ENCODE measurements at regions of chr22 and their contacts with region 1.

Region 1: GRCh38 chr22:38051900-38052862 is 5.0 kb upstream of the PICK1 start:
- DNase-seq: peak; percentile 90
- ATAC-seq: peak; percentile 87
- H3K4me3 ChIP-seq: no peak overlapping the region
- H3K4me3 Mint-ChIP-seq: peak overlapping the region; percentile 26
- H3K27ac ChIP-seq: no peak overlapping the region
- H3K27ac Mint-ChIP-seq: no peak overlapping the region
- H3K4me1 ChIP-seq: peaks cover 6 to 20% of the 10 kb centered on the region in 2 donors
- H3K4me1 Mint-ChIP-seq: peaks cover 13% of the 10 kb centered on the region
- H3K27me3 ChIP-seq: peaks cover 0 to 14% (median 2%) of the 10 kb centered on the region in 4 experiments
- H3K27me3 Mint-ChIP-seq: peaks cover 4% of the 10 kb centered on the region
- CTCF ChIP-seq: peak; percentile 88

Region 2: DNA sequence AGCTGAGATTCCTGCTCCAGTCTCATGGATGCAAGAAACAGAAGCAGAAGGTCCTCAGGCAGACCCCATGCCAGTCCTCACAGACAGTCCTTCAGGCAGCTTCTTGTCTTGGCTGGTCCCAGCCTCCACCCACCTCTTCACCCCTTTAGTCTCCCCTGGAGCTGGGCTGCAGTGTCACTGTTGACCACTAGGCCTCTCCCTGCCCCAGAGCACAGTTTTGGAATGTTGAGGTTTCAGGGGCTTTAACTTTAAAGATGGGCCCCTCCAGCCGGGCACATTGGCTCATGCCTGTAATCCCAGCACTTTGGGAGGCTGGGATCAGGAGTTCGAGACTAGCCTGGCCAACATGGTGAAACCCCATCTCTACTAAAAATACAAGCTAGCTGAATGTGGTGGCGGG is 283.9 kb before region 1 on chr22:
- CTCF ChIA-PET with region 1: no interaction called
- POLR2A ChIA-PET with region 1: no interaction called
- intact Hi-C with region 1: no loop called
- DNase-seq: no peak
- ATAC-seq: no peak
- H3K4me3 ChIP-seq: no peak overlapping the region
- H3K4me3 Mint-ChIP-seq: no peak overlapping the region
- H3K27ac ChIP-seq: no peak overlapping the region
- H3K27ac Mint-ChIP-seq: no peak overlapping the region
- H3K4me1 ChIP-seq: no peaks in the 10 kb centered on the region
- H3K4me1 Mint-ChIP-seq: no peaks in the 10 kb centered on the region
- H3K27me3 ChIP-seq: no peaks in the 10 kb centered on the region
- H3K27me3 Mint-ChIP-seq: no peaks in the 10 kb centered on the region
- CTCF ChIP-seq: no peak

Region 3: GRCh38 chr22:37862570-37863325 is 189.4 kb before region 1 on chr22:
- CTCF ChIA-PET with region 1: no interaction called
- POLR2A ChIA-PET with region 1: no interaction called
- intact Hi-C with region 1: no loop called
- DNase-seq: no peak
- ATAC-seq: no peak
- H3K4me3 ChIP-seq: no peak overlapping the region
- H3K4me3 Mint-ChIP-seq: no peak overlapping the region
- H3K27ac ChIP-seq: no peak overlapping the region
- H3K27ac Mint-ChIP-seq: no peak overlapping the region
- H3K4me1 ChIP-seq: no peaks in the 10 kb centered on the region
- H3K4me1 Mint-ChIP-seq: no peaks in the 10 kb centered on the region
- H3K27me3 ChIP-seq: no peaks in the 10 kb centered on the region
- H3K27me3 Mint-ChIP-seq: no peaks in the 10 kb centered on the region
- CTCF ChIP-seq: no peak

Region 4: GRCh38 chr22:38114484-38115398 is 62.6 kb after region 1 on chr22:
- CTCF ChIA-PET with region 1: interaction called, 13 read pairs
- POLR2A ChIA-PET with region 1: no interaction called
- intact Hi-C with region 1: no loop called
- DNase-seq: peak; percentile 76
- ATAC-seq: peak; percentile 86
- H3K4me3 ChIP-seq: no peak overlapping the region
- H3K4me3 Mint-ChIP-seq: no peak overlapping the region
- H3K27ac ChIP-seq: no peak overlapping the region
- H3K27ac Mint-ChIP-seq: no peak overlapping the region
- H3K4me1 ChIP-seq: peaks cover 0 to 3% of the 10 kb centered on the region in 2 donors
- H3K4me1 Mint-ChIP-seq: peaks cover 2% of the 10 kb centered on the region
- H3K27me3 ChIP-seq: no peaks in the 10 kb centered on the region
- H3K27me3 Mint-ChIP-seq: no peaks in the 10 kb centered on the region
- CTCF ChIP-seq: peak; percentile 86

Region 5: DNA sequence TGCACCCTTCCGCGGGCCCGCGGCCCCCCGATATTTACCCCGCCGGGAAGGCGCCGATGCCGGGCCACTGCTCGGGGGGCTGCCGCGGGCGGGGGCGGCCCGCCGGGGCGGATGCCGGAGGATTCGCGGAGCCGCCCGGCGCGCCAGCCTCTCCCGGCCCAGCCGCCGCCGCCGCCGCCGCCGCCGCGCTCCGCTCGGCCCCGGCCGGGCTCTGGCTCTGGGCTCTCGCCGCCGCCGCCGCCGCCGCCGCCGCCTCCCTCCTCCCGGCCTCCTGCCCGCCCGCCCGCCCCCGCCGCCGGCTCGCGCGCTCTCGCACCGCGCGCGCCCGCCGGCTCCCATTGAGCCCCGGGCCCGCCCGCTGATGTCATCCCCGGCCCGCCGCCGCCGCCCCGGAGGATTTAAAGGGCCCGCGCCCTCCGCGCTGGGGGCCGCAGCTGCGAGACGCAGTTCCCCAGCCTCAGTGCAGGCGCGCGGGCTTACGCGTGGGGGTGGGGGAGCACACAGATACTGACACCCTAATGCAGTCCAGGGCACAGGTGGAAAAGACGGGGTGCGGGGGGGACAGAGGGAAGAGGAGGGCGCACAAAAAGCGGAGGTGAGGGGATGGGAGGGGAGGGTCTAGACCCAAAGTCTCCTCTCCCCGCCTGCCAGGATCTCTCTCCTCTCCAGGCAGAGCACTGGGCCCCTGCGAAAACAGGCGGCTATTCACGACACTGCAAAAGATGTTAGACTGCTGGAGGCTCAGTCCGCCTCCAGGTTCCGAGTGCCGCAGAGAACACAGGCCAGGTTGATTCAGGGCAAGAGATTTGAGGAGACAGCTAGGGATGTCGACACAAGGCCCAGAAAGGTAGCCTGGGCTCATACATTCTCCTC is 265.2 kb after region 1 on chr22 and contains the start of gene CSNK1E:
- CTCF ChIA-PET with region 1: no interaction called
- POLR2A ChIA-PET with region 1: no interaction called
- intact Hi-C with region 1: loop called (anchors 10 kb)
- DNase-seq: peak; percentile 84
- ATAC-seq: peak; percentile 61
- H3K4me3 ChIP-seq: peak within 1 kb of the TSS; percentile 3 to 71 (median 58)
- H3K4me3 Mint-ChIP-seq: peak within 1 kb of the TSS; percentile 92
- H3K27ac ChIP-seq: peak within 1 kb of the TSS; percentile 82 to 91
- H3K27ac Mint-ChIP-seq: peak within 1 kb of the TSS; percentile 97
- H3K4me1 ChIP-seq: peaks cover 40 to 51% of the 10 kb centered on the region in 2 donors
- H3K4me1 Mint-ChIP-seq: peaks cover 49% of the 10 kb centered on the region
- H3K27me3 ChIP-seq: no peaks in the 10 kb centered on the region
- H3K27me3 Mint-ChIP-seq: no peaks in the 10 kb centered on the region
- CTCF ChIP-seq: no peak
- total RNA-seq, gene CSNK1E: 133 and 136 TPM in 2 replicates

Region 6: GRCh38 chr22:38398609-38399461 is 346.7 kb after region 1 on chr22:
- CTCF ChIA-PET with region 1: interaction called, 3 read pairs
- POLR2A ChIA-PET with region 1: no interaction called
- intact Hi-C with region 1: loop called (anchors 5 kb)
- DNase-seq: peak; percentile 87
- ATAC-seq: peak; percentile 76
- H3K4me3 ChIP-seq: peak overlapping the region; percentile 2 to 75 (median 61)
- H3K4me3 Mint-ChIP-seq: peak overlapping the region; percentile 84
- H3K27ac ChIP-seq: peak overlapping the region; percentile 82 to 86
- H3K27ac Mint-ChIP-seq: peak overlapping the region; percentile 91
- H3K4me1 ChIP-seq: peaks cover 23 to 28% of the 10 kb centered on the region in 2 donors
- H3K4me1 Mint-ChIP-seq: peaks cover 36% of the 10 kb centered on the region
- H3K27me3 ChIP-seq: no peaks in the 10 kb centered on the region
- H3K27me3 Mint-ChIP-seq: no peaks in the 10 kb centered on the region
- CTCF ChIP-seq: no peak

Region 7: GRCh38 chr22:38569972-38570778 is 518.0 kb after region 1 on chr22 and contains the start of gene DMC1:
- CTCF ChIA-PET with region 1: interaction called, 89 read pairs
- POLR2A ChIA-PET with region 1: no interaction called
- intact Hi-C with region 1: loop called (anchors 1 kb)
- DNase-seq: peak; percentile 94
- ATAC-seq: peak; percentile 98
- H3K4me3 ChIP-seq: peak within 1 kb of the TSS; percentile 71 to 93 (median 75)
- H3K4me3 Mint-ChIP-seq: peak within 1 kb of the TSS; percentile 89
- H3K27ac ChIP-seq: peak within 1 kb of the TSS; percentile 25 to 46
- H3K27ac Mint-ChIP-seq: peak within 1 kb of the TSS; percentile 70
- H3K4me1 ChIP-seq: peaks cover 14 to 18% of the 10 kb centered on the region in 2 donors
- H3K4me1 Mint-ChIP-seq: peaks cover 14% of the 10 kb centered on the region
- H3K27me3 ChIP-seq: no peaks in the 10 kb centered on the region
- H3K27me3 Mint-ChIP-seq: no peaks in the 10 kb centered on the region
- CTCF ChIP-seq: no peak
- total RNA-seq, gene DMC1: 0.22 and 0.64 TPM in 2 replicates

Measured in B cell (primary cell).